Heart left ventricle (tissue), 16 donors: ENCODE measurements at regions of chr1 and their contacts with region 1.

Region 1: DNA sequence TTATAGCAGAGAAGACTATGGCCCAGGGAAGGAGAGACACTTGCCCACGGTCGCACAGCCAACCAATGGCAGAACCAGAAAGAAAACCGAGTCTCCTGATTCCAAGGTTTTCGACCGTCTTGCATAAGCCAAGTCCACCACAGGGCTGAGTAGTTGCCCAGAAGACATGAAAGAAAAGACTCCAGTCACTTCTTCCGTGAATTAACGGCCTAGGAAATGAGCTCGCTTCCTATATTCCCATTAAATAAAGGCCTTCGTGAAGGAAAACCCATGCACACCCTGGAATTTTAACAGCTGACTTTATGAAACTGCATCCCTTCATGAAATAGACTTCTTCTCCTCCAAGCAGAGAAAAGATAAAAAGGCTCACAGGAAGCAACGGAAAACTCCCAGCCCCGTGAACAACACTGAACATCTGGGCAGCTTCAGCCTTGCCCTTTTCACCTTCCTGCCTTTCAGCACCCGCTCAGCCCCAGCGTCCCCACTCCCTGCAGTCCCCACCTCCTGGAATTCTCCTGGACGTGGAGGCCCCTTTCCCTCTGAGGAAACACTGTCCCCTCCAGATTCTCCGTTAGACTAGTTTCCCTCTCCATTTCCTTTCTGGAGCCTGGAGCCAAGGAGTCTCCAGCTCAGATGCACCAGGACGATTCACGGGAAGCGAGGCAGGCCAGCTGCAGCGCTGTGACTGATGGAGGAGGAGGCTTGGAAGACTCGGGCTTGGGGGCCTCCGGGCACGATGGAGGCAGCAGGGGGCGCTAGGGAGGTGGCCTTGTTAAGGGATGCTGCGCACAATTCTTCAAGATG is 2.7 kb upstream of the MYOC start:
- DNase-seq: peak; percentile 85 to 91 (median 86)
- ATAC-seq: peak; percentile 84 to 92 (median 88)
- H3K4me3 ChIP-seq: peak overlapping the region in 10 of 12 donors; percentile 10 to 35 (median 21)
- H3K27ac ChIP-seq: peak overlapping the region; percentile 45 to 95 (median 79)
- H3K4me1 ChIP-seq: peaks cover 2 to 53% (median 31%) of the 10 kb centered on the region in 12 donors
- H3K27me3 ChIP-seq: no peaks in the 10 kb centered on the region
- CTCF ChIP-seq: peak; percentile 49 to 84 (median 77)
- POLR2A ChIP-seq: no peak

Region 2: GRCh38 chr1:171295821-171296220 is 359.3 kb before region 1 on chr1:
- intact Hi-C with region 1: no loop called
- DNase-seq: no peak
- ATAC-seq: no peak
- H3K4me3 ChIP-seq: no peak overlapping the region
- H3K27ac ChIP-seq: no peak overlapping the region
- H3K4me1 ChIP-seq: no peaks in the 10 kb centered on the region
- H3K27me3 ChIP-seq: no peaks in the 10 kb centered on the region
- CTCF ChIP-seq: no peak
- POLR2A ChIP-seq: no peak

Region 3: DNA sequence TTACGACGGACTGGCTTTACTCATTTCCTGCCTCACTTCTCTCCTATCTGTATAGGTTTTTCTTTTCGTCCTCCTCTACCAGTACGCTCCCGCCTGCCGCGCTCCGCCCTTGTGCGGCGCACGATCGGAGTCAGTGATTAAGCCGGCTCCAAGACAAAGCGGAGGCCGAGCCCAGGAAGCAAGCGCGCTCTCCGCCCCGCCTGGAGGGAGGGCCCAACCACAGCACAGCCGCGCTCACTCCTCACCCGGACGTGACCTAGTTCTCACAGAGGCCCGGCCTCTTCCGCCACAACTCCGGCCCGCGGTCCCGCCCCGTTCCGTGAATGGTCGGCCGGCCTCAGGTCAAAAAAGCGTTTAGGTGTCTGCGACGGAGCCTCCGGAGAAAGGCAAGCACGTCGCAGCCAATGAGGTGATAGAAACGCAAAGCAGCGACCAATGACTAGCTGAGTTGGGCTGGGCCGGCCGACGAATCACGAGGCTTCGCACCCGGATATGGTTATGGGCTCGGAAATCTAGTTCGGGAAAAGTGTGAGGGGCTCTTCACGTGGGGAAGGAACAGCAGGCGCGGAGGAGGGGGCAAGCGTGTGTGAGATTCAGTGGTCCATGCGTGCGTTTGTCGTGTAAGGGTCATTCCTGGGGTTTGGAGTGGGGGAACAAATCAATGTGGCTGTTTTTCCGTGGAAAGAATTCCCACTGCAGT is 126.2 kb after region 1 on chr1 and contains the start of gene METTL13:
- intact Hi-C with region 1: loop called in 2 of 10 experiments (anchors 2 to 5 kb)
- DNase-seq: peak; percentile 98 to 99 (median 99)
- ATAC-seq: peak; percentile 100
- H3K4me3 ChIP-seq: peak within 1 kb of the TSS; percentile 46 to 91 (median 75)
- H3K27ac ChIP-seq: peak within 1 kb of the TSS; percentile 54 to 93 (median 90)
- H3K4me1 ChIP-seq: peaks cover 0 to 31% (median 18%) of the 10 kb centered on the region in 12 donors
- H3K27me3 ChIP-seq: no peaks in the 10 kb centered on the region
- CTCF ChIP-seq: peak in 1 of 12 donors; percentile 12
- POLR2A ChIP-seq: peak; percentile 73 to 97
- total RNA-seq, gene METTL13: 13.1 to 24.1 (median 14.8) TPM